ENCODE measurements at regions of chr4 and their contacts with region 1.

Region 1: DNA sequence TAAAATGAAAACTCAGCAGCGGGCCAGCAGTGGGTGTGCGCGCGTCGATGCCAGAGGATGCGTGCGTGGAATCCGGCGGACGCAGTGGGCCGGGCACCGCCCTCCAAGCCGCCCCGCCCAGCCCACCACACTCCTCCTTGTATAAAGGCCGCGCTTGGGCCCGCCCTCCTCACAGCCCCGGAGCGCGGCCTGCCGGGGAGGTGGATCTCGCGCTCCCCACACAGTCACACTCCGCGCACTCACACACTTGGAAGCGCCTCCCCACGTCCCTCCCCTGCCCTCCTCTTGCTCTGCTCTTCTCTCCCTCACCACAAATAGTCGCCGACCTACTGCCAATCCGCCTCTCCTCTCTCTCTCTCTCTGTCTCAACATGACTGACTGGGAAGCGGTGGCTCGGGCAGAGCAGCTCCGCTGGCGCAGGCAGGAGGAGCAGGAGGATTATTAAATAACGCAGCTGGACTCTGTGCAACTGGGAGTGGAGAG is at the start of gene CCSER1:
- DNase-seq: peak; percentile 90
- ATAC-seq: peak; percentile 97
- total RNA-seq, gene CCSER1: 12.9 TPM

Region 2: GRCh38 chr4:89823416-89823815 is 303.8 kb before region 1 on chr4:
- intact Hi-C with region 1: no loop called
- DNase-seq: no peak
- ATAC-seq: no peak

Region 3: DNA sequence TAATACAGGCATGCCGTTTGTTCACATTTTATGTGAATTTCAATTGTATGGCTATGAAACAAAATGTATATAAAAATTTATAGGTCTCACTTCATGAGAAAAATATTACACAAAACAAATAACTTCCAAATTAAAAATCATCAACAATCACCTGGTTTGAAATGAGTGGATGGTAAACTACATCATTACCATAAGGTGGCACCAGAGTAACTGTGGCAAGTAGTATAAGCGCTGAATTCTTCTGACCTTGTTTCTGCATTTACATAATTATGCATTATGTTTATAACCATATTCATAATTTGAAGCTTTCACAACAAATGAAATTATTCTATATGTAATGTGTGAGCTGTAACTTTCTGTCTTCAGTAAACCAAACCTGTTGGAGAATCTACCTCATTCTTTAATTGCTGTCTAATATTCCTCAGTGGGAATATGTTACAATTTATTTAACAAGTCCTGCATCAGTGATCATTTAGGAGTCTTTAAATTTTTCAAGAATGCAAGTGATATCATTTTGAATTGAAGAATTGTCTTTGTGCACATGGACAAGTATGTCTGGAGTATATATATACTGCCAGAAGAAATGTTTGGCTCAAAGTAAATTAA is 177.4 kb before region 1 on chr4:
- intact Hi-C with region 1: loop called (anchors 10 kb)
- DNase-seq: no peak
- ATAC-seq: no peak

Region 4: DNA sequence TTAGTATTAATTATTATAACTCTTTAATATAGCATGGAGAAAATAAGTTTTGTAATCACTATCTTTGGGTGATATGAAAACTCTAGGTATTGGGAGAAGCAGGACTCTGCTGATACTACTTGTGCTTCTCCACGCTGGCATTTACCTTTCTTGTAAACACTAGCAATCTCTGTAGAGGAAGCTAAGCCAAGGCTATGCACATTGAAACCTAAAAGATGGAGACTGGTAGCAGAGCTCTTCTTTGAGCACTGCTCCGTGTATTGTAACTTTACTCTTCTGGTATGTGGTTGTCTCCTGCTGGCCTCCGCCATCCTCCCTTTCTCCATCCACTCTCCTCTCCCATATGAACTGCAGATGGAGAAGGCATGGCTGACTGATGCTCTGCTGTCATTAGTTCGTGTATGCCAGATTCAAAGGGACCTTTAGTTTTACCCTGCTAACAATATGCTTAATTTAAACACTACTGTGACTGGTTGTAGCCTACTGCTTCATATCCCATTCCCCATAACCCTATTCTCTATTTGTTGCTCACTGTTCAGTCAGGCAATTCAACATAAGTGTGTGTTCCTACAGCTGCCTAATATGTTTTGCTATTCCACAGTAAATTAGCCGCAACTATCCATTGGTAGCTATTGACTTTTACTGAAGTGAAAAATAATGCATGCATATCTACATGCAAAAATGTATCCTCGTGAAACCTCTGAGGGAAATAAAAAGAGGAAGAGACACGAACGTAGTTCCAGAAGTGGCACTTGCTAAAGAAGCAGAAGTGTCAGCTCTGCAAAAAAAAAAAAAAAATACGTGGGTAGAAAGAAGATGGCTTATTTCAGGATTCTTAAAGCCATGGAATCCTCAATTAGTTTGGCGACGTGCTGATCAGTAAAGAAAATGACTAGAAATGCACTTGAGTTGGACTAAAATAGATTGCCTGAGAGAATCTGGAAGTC is 55.7 kb before region 1 on chr4:
- intact Hi-C with region 1: no loop called
- DNase-seq: no peak
- ATAC-seq: no peak

Region 5: DNA sequence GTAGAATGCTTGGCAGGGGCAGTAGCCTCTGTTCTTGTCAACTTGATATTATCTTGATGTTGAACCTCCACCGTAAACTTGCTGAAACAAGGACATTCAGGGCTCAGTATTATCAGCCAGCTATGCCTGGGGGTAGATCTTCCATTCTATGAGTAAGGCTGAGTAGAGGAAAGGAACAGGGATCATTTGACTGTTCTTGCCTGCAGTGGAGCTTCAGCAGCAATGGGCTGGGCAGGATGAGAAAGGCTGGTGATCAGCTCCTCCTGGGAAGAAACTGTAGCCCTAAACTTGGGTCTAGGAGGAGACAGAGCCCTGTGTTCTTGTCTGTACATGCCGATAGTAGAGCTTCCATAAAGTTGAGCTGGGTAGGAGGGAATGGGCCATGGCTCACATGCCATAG is 127.1 kb after region 1 on chr4:
- intact Hi-C with region 1: loop called (anchors 5 kb)
- DNase-seq: no peak
- ATAC-seq: no peak